ENCODE measurements at regions of chr2 and their contacts with region 1.

Region 1: GRCh38 chr2:174465327-174465726 is 21.5 kb downstream of the GPR155 start:
- DNase-seq: peak in 1 of 2 donors; percentile 13
- ATAC-seq: peak in 5 of 8 donors; percentile 38 to 48 (median 46)
- H3K4me3 ChIP-seq: no peak overlapping the region
- H3K27ac ChIP-seq: no peak overlapping the region
- H3K4me1 ChIP-seq: no peaks in the 10 kb centered on the region
- H3K27me3 ChIP-seq: no peaks in the 10 kb centered on the region
- CTCF ChIP-seq: peak in 3 of 9 donors; percentile 11 to 42 (median 18)

Region 2: DNA sequence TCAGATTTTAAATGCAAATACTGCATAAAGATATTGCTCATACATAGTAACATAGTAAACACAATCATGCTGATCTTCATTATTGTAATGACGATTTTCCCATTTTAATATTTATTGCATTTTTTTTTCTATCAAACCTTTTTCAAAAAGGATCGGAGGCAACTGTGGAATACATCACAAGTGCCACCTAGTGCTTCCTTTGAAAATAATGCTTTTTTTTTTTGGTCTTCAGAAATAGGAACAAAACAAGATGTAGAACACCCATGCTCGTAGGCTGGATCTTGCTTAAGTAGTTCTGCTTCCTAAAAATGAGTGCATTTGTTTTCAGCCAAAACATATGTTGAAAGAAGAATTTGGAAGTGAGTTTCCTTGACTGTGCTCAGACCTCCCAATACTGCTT is 57.2 kb after region 1 on chr2:
- intact Hi-C with region 1: loop called in 8 of 10 experiments (anchors 2 to 10 kb)
- DNase-seq: no peak
- ATAC-seq: peak in 3 of 8 donors; percentile 27 to 58 (median 34)
- H3K4me3 ChIP-seq: no peak overlapping the region
- H3K27ac ChIP-seq: peak overlapping the region in 1 of 10 donors; percentile 82
- H3K4me1 ChIP-seq: peaks cover 0 to 26% (median 0%) of the 10 kb centered on the region in 9 donors
- H3K27me3 ChIP-seq: peaks cover 0 to 6% (median 0%) of the 10 kb centered on the region in 7 donors
- CTCF ChIP-seq: peak in 7 of 9 donors; percentile 23 to 58 (median 46)

Region 3: DNA sequence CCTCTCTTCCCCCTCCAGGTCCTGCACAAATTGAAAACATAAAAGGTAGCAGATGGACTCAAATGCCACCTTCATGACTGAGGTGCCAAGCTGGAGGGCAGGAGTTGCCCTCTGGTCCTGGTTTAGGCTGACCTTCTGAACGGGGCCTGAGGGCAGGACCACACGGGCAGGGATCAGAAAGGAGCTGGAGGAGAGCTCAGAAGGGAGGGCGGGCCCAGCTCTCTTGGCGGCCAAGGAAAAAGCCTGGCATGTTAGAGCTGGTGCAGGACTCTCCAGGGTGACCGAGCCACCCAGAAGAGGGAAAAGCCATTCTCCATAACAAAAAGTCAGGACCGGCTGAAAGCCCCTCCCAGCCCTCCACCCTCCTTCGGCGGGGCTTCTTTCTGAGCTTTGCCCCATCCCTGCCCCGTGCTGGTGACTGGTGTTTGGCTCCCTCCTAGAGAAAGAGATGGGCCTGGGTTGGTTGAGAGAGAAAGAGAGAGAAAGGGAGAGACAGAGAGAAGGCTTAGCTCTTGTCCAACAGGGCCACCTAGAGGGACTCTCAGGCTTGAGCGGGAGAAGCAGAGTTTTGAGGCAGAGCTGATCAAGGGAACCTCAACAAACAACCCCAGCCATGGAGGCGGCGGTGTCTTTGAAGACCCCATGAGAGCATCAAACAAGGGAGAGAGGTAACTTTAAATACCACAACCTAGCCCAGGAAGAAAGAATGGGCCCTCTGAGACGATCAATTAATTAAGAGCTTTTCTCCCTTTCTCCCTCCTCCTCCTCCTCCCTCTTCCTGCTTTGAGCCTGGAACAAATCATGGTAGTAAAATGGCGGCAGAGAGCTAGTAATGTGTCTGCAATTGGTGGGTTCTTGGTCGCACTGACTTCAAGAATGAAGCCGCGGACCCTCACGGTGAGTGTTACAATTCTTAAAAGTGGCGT is 81.5 kb after region 1 on chr2:
- intact Hi-C with region 1: loop called in 3 of 10 experiments (anchors 1 to 5 kb)
- DNase-seq: no peak
- ATAC-seq: peak in 5 of 8 donors; percentile 37 to 70 (median 52)
- H3K4me3 ChIP-seq: no peak overlapping the region
- H3K27ac ChIP-seq: no peak overlapping the region
- H3K4me1 ChIP-seq: no peaks in the 10 kb centered on the region
- H3K27me3 ChIP-seq: no peaks in the 10 kb centered on the region
- CTCF ChIP-seq: peak in 7 of 9 donors; percentile 12 to 47 (median 37)

Region 4: GRCh38 chr2:174603280-174603679 is 138.0 kb after region 1 on chr2:
- intact Hi-C with region 1: loop called (anchors 2 to 10 kb)
- DNase-seq: peak; percentile 30 to 76
- ATAC-seq: peak; percentile 89 to 94 (median 90)
- H3K4me3 ChIP-seq: no peak overlapping the region
- H3K27ac ChIP-seq: peak overlapping the region in 2 of 10 donors; percentile 24 to 98
- H3K4me1 ChIP-seq: peaks cover 0 to 73% (median 18%) of the 10 kb centered on the region in 9 donors
- H3K27me3 ChIP-seq: no peaks in the 10 kb centered on the region
- CTCF ChIP-seq: peak; percentile 16 to 79 (median 63)

Region 5: GRCh38 chr2:174688079-174688478 is 222.8 kb after region 1 on chr2:
- intact Hi-C with region 1: loop called in 9 of 10 experiments (anchors 2 to 5 kb)
- DNase-seq: no peak
- ATAC-seq: peak in 1 of 8 donors; percentile 43
- H3K4me3 ChIP-seq: no peak overlapping the region
- H3K27ac ChIP-seq: no peak overlapping the region
- H3K4me1 ChIP-seq: peaks cover 0 to 14% (median 4%) of the 10 kb centered on the region in 9 donors
- H3K27me3 ChIP-seq: no peaks in the 10 kb centered on the region
- CTCF ChIP-seq: peak; percentile 18 to 63 (median 49)